Mammary epithelial cell (primary cell): ENCODE measurements at regions of chr10 and their contacts with region 1.

Region 1: GRCh38 chr10:89251409-89252224 is at the start of gene LIPA:
- DNase-seq: peak; percentile 98
- H3K4me3 ChIP-seq: peak within 1 kb of the TSS; percentile 68 to 93 (median 91)
- H3K27ac ChIP-seq: peak within 1 kb of the TSS; percentile 25
- H3K4me1 ChIP-seq: peaks cover 5% of the 10 kb centered on the region
- H3K27me3 ChIP-seq: no peaks in the 10 kb centered on the region
- CTCF ChIP-seq: no peak
- total RNA-seq, gene LIPA: 58.5 to 62.2 TPM

Region 2: GRCh38 chr10:89301721-89302445 is 50.3 kb after region 1 on chr10 and contains the start of gene IFIT2:
- CTCF ChIA-PET with region 1: no interaction called
- dilution Hi-C with region 1: no loop called
- in situ Hi-C with region 1: no loop called
- intact Hi-C with region 1: no loop called
- DNase-seq: peak; percentile 66
- H3K4me3 ChIP-seq: peak within 1 kb of the TSS; percentile 39 to 58 (median 42)
- H3K27ac ChIP-seq: peak within 1 kb of the TSS; percentile 71
- H3K4me1 ChIP-seq: peaks cover 16% of the 10 kb centered on the region
- H3K27me3 ChIP-seq: no peaks in the 10 kb centered on the region
- CTCF ChIP-seq: no peak
- total RNA-seq, gene IFIT2: 1.1 to 1.2 TPM

Region 3: GRCh38 chr10:89369156-89370105 is 117.8 kb after region 1 on chr10:
- CTCF ChIA-PET with region 1: interaction called, 4 read pairs
- dilution Hi-C with region 1: no loop called
- in situ Hi-C with region 1: loop called in 1 of 2 experiments (anchors 10 kb)
- intact Hi-C with region 1: no loop called
- DNase-seq: no peak
- H3K4me3 ChIP-seq: no peak overlapping the region
- H3K27ac ChIP-seq: no peak overlapping the region
- H3K4me1 ChIP-seq: peaks cover 9% of the 10 kb centered on the region
- H3K27me3 ChIP-seq: no peaks in the 10 kb centered on the region
- CTCF ChIP-seq: peak; percentile 44 to 60

Region 4: GRCh38 chr10:89391917-89392756 is 140.5 kb after region 1 on chr10 and contains the start of gene IFIT1:
- CTCF ChIA-PET with region 1: no interaction called
- dilution Hi-C with region 1: no loop called
- in situ Hi-C with region 1: loop called in 1 of 2 experiments (anchors 10 kb)
- intact Hi-C with region 1: no loop called
- DNase-seq: peak; percentile 78
- H3K4me3 ChIP-seq: peak within 1 kb of the TSS; percentile 57 to 97 (median 89)
- H3K27ac ChIP-seq: peak within 1 kb of the TSS; percentile 81
- H3K4me1 ChIP-seq: peaks cover 14% of the 10 kb centered on the region
- H3K27me3 ChIP-seq: no peaks in the 10 kb centered on the region
- CTCF ChIP-seq: peak in 1 of 2 donors; percentile 18
- total RNA-seq, gene IFIT1: 0.50 to 1.2 TPM

Region 5: DNA sequence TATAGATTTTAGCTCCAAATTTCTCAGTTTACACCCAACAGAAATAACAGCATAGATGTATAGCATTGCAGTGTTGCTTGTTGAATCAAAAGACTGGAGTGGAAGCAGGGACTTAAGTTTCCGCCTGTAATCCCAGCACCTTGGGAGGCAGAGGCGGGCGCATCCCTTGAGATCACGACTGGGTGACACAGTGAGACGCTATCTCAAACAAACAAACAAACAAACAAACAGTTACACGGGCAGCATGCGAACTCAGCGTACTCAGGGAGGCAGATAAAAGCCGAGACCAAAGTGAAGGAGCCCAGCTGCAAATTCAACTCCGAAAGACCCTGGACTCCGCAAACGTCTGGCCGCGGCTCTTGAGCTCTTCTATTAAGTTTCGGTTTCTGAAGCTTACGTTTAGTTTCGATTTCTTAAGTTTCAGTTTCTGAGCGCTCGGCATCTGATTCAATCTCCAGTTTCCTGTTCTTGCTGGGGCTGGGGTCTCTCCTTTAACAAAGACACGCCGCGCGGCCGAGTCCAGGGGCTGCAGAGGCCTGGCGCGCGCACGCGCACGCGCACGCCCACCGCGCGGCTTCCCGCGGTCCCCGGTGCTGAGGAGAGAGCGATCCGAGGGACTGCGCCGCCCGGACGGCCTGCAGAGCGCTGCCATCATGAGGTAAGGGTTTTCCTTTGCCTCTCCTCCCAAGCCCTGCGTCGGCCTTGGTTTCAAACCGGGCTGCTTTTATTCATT is 162.7 kb after region 1 on chr10 and contains the start of gene IFIT5:
- CTCF ChIA-PET with region 1: interaction called, 26 read pairs
- dilution Hi-C with region 1: no loop called
- in situ Hi-C with region 1: no loop called
- intact Hi-C with region 1: no loop called
- DNase-seq: peak; percentile 71
- H3K4me3 ChIP-seq: peak within 1 kb of the TSS; percentile 60 to 75 (median 71)
- H3K27ac ChIP-seq: peak within 1 kb of the TSS; percentile 73
- H3K4me1 ChIP-seq: no peaks in the 10 kb centered on the region
- H3K27me3 ChIP-seq: no peaks in the 10 kb centered on the region
- CTCF ChIP-seq: no peak
- total RNA-seq, gene IFIT5: 7.6 to 11.2 TPM

Region 6: DNA sequence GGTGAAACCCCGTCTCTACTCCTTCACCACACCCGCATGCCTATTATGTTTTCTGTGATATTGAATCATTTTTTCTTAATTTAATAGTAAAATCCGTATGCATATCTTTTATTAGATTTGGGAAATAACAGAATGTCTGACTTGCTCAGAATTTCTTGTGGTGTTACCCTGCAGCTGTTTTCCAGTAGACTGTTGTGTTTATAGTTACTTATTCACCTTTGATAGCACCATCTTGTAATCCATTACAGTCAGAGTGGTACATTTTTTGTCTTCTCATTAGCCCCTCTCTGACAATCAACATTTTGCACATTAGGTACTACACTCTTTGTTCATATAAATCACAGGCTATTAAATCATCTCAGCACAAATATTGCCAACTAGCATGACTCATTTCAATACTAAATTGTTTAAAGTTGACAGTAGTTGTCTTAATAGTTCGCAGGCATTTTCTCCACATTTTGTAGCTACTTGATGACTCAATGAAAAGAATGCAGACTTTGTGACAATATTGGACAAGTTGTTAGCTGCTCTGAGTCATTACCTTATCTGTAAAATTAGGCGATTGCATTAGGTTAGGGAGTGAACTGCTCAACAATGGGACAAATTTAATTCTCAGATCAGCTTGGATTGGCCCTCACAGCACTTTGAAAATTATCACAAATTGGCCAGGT is 301.6 kb after region 1 on chr10:
- CTCF ChIA-PET with region 1: no interaction called
- dilution Hi-C with region 1: no loop called
- in situ Hi-C with region 1: loop called in 1 of 2 experiments (anchors 10 kb)
- intact Hi-C with region 1: no loop called
- DNase-seq: peak; percentile 88
- H3K4me3 ChIP-seq: no peak overlapping the region
- H3K27ac ChIP-seq: no peak overlapping the region
- H3K4me1 ChIP-seq: peaks cover 27% of the 10 kb centered on the region
- H3K27me3 ChIP-seq: no peaks in the 10 kb centered on the region
- CTCF ChIP-seq: no peak

Region 7: GRCh38 chr10:89759531-89759930 is 507.9 kb after region 1 on chr10:
- CTCF ChIA-PET with region 1: no interaction called
- dilution Hi-C with region 1: no loop called
- in situ Hi-C with region 1: no loop called
- intact Hi-C with region 1: no loop called
- DNase-seq: no peak
- H3K4me3 ChIP-seq: no peak overlapping the region
- H3K27ac ChIP-seq: no peak overlapping the region
- H3K4me1 ChIP-seq: no peaks in the 10 kb centered on the region
- H3K27me3 ChIP-seq: no peaks in the 10 kb centered on the region
- CTCF ChIP-seq: no peak